AG04450 (cell line): ENCODE measurements at regions of chr2 and their contacts with region 1.

Region 1: GRCh38 chr2:203143391-203143790 is 95.4 kb upstream of the CYP20A1 start:
- DNase-seq: no peak
- H3K4me3 ChIP-seq: no peak overlapping the region
- H3K27ac ChIP-seq: no peak overlapping the region
- H3K27me3 ChIP-seq: no peaks in the 10 kb centered on the region
- CTCF ChIP-seq: no peak

Region 2: DNA sequence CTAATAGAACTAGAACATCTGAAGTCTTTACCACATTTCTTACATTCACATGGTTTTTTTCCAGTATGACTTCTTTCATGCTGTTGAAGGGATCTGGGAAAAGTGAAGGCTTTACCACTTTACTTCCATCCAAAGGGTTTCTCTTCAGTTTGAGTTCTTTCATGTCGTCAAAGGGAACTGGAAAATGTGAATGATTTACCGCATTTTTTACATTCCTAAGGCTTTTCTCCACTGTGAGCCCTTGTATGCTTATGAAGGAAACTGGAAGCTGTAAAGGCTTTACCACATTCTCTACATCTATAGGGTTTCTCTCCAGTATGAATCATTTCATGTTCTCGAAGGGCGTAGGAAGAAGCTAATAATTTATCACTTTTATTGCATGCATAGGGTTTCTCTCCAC is 82.0 kb before region 1 on chr2:
- CTCF ChIA-PET with region 1: no interaction called
- POLR2A ChIA-PET with region 1: interaction called, 10 read pairs
- DNase-seq: peak; percentile 34
- H3K4me3 ChIP-seq: no peak overlapping the region
- H3K27ac ChIP-seq: no peak overlapping the region
- H3K27me3 ChIP-seq: no peaks in the 10 kb centered on the region
- CTCF ChIP-seq: no peak

Region 3: DNA sequence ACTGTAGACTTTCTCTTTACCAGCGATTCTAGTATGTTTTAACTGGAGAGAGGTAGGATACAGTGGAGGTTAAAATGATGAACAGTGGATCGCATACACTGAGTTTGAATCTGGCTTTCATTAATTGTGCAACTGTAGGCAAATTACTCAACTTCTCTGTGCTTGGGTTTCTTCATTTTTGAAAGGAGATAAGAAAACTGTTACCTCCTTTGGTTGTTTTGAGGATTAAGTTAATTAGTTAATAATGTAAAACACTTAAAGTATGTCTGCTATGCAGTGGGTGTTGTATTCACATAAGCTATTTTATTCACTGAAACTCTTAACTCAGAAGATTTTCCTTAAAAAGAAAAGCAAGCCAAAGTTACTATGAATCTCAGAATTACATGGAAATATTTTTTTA is 16.4 kb before region 1 on chr2:
- CTCF ChIA-PET with region 1: interaction called, 13 read pairs
- POLR2A ChIA-PET with region 1: no interaction called
- DNase-seq: no peak
- H3K4me3 ChIP-seq: no peak overlapping the region
- H3K27ac ChIP-seq: no peak overlapping the region
- H3K27me3 ChIP-seq: no peaks in the 10 kb centered on the region
- CTCF ChIP-seq: no peak